Activated T-helper 2 cell treated with anti-CD3 and anti-CD28 coated beads, Interferon-gamma antibody, Interleukin-2, Interleukin-4, amounts not matched to agents 10 μg/mL and 5 μg/mL and 100 μg/mL, durations not matched to agents 14 hours and 24 hours and 36 hours (primary cell): ENCODE measurements at regions of chr6 and their contacts with region 1.

Region 1: GRCh38 chr6:99393698-99394531 is at the start of gene COQ3:
- DNase-seq: peak; percentile 65
- H3K4me3 Mint-ChIP-seq: peak within 1 kb of the TSS; percentile 91
- H3K27ac Mint-ChIP-seq: peak within 1 kb of the TSS; percentile 88
- H3K4me1 Mint-ChIP-seq: peaks cover 6% of the 10 kb centered on the region
- H3K27me3 Mint-ChIP-seq: no peaks in the 10 kb centered on the region
- total RNA-seq, gene COQ3: 12.9 and 13.7 TPM in 2 replicates

Region 2: DNA sequence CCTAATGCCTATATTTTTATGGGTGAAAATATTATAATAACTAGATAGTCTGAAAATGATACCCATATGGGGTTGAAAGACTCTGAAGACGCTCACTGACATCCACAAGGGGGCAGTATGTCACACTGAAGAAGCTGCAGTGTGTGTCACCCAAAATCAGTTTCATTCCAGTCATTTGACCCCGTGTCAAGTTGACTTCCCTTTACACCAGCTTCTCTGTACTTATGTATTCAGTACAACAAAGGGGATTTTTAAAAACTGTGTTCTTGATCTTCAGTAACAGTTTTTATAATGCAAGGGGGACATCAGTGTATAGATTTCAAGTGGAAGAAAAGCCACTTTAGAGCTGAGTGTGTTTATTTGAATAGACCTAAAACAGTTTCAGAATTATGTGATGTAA is 63.8 kb before region 1 on chr6:
- intact Hi-C with region 1: loop called (anchors 1 kb)
- DNase-seq: peak; percentile 40
- H3K4me3 Mint-ChIP-seq: no peak overlapping the region
- H3K27ac Mint-ChIP-seq: no peak overlapping the region
- H3K4me1 Mint-ChIP-seq: peaks cover 5% of the 10 kb centered on the region
- H3K27me3 Mint-ChIP-seq: peaks cover 2% of the 10 kb centered on the region

Region 3: GRCh38 chr6:99349171-99350141 is 44.5 kb before region 1 on chr6 and contains the start of gene FAXC:
- intact Hi-C with region 1: loop called (anchors 5 kb)
- DNase-seq: peak; percentile 12
- H3K4me3 Mint-ChIP-seq: peak within 1 kb of the TSS; percentile 30
- H3K27ac Mint-ChIP-seq: no peak within 1 kb of the TSS
- H3K4me1 Mint-ChIP-seq: peaks cover 7% of the 10 kb centered on the region
- H3K27me3 Mint-ChIP-seq: peaks cover 62% of the 10 kb centered on the region
- total RNA-seq, gene FAXC: 0.25 TPM in 1 of 2 replicates, not detected in the other

Region 4: GRCh38 chr6:99409672-99410071 is 15.8 kb after region 1 on chr6:
- intact Hi-C with region 1: loop called (anchors 2 kb)
- DNase-seq: no peak
- H3K4me3 Mint-ChIP-seq: no peak overlapping the region
- H3K27ac Mint-ChIP-seq: no peak overlapping the region
- H3K4me1 Mint-ChIP-seq: peaks cover 7% of the 10 kb centered on the region
- H3K27me3 Mint-ChIP-seq: no peaks in the 10 kb centered on the region